Activated T-helper 2 cell treated with anti-CD3 and anti-CD28 coated beads, Interferon-gamma antibody, Interleukin-2, Interleukin-4, amounts not matched to agents 10 μg/mL and 5 μg/mL and 100 μg/mL, durations not matched to agents 14 hours and 24 hours and 36 hours (primary cell): ENCODE measurements at regions of chr21 and their contacts with region 1.

Region 1: GRCh38 chr21:29078869-29079767 is 5.7 kb upstream of the CCT8 start:
- DNase-seq: no peak
- H3K4me3 Mint-ChIP-seq: peak overlapping the region; percentile 34
- H3K27ac Mint-ChIP-seq: peak overlapping the region; percentile 83
- H3K4me1 Mint-ChIP-seq: peaks cover 45% of the 10 kb centered on the region
- H3K27me3 Mint-ChIP-seq: no peaks in the 10 kb centered on the region

Region 2: GRCh38 chr21:29024474-29025327 is 54.4 kb before region 1 on chr21 and contains the start of gene USP16:
- intact Hi-C with region 1: no loop called
- DNase-seq: peak; percentile 96
- H3K4me3 Mint-ChIP-seq: peak within 1 kb of the TSS; percentile 96
- H3K27ac Mint-ChIP-seq: peak within 1 kb of the TSS; percentile 99
- H3K4me1 Mint-ChIP-seq: peaks cover 28% of the 10 kb centered on the region
- H3K27me3 Mint-ChIP-seq: no peaks in the 10 kb centered on the region
- total RNA-seq, gene USP16: 40.9 and 44.1 TPM in 2 replicates

Region 3: DNA sequence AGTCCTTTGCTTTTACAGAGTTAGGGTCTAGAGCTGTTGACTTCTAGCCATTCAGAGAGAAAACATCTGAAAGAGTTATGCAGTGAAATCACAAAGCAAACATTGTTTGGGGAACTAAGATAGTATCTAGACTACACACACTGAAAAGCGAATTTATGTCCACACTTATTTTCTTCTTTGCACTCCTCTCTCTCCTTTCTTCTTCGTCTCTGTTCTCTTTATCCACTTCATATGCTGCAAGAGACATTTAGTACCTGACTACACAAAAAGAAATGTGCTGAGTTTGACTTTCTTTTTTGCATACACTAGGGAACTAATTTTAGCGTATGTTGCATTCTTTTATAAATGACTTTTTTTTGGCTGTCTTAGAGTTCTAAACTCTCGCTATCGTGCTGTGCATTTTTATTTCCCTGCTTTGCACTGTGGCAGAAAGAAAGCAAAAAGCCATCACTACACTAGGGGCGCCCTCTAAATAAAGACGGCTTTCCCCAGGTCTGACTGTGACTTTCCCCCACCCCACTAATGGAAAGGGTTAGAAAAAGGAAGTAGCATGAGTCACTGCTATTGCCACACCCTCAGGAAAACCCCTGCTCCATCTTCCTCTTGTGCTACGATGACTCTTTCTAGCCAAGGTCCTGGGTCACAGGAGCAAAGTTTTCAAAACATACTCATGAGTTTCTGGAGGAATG is 117.0 kb after region 1 on chr21:
- intact Hi-C with region 1: loop called (anchors 5 kb)
- DNase-seq: peak; percentile 64
- H3K4me3 Mint-ChIP-seq: peak overlapping the region; percentile 80
- H3K27ac Mint-ChIP-seq: peak overlapping the region; percentile 80
- H3K4me1 Mint-ChIP-seq: peaks cover 32% of the 10 kb centered on the region
- H3K27me3 Mint-ChIP-seq: no peaks in the 10 kb centered on the region